ENCODE measurements at regions of chrX and their contacts with region 1.

Region 1: GRCh38 chrX:118100091-118100490 is 16.5 kb downstream of the KLHL13 start:
- DNase-seq: no peak
- ATAC-seq: no peak
- H3K4me3 ChIP-seq: no peak overlapping the region
- H3K27ac ChIP-seq: no peak overlapping the region
- H3K4me1 ChIP-seq: no peaks in the 10 kb centered on the region
- H3K27me3 ChIP-seq: no peaks in the 10 kb centered on the region
- CTCF ChIP-seq: no peak

Region 2: DNA sequence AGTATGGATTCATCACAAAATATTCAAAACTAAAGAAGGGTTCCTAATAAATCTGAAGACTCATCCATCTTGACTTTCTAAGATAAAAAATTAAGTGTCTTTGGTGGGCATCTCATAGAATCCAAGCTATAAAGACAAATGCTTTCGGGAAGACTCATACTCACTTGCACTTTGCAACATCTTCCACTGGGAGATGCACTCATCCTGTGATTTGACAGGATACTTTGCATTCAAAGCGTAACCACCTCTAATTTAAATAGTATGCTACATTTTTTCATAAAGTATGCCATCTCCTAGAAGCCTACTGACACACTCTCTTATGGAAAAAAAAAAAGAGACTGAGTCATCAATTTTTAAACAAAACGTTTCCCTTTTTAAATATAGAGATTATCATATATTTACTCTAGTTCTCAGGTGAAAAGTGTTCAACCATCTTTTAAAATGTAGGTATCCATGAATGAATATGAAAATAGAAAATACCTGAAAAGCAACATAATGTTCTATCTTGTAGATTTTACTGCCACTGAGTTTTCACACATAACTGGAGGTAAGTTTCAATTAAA is 103.1 kb before region 1 on chrX:
- CTCF ChIA-PET with region 1: interaction called, 10 read pairs
- POLR2A ChIA-PET with region 1: no interaction called
- in situ Hi-C with region 1: no loop called
- intact Hi-C with region 1: no loop called
- DNase-seq: no peak
- ATAC-seq: no peak
- H3K4me3 ChIP-seq: no peak overlapping the region
- H3K27ac ChIP-seq: no peak overlapping the region
- H3K4me1 ChIP-seq: no peaks in the 10 kb centered on the region
- H3K27me3 ChIP-seq: no peaks in the 10 kb centered on the region
- CTCF ChIP-seq: peak; percentile 58; the same call in 1 of the 2 replicates

Region 3: GRCh38 chrX:118066867-118067515 is 33.1 kb before region 1 on chrX:
- CTCF ChIA-PET with region 1: no interaction called
- POLR2A ChIA-PET with region 1: no interaction called
- in situ Hi-C with region 1: no loop called
- intact Hi-C with region 1: no loop called
- DNase-seq: no peak
- ATAC-seq: no peak; the same call in 1 of the 2 replicates
- H3K4me3 ChIP-seq: no peak overlapping the region
- H3K27ac ChIP-seq: no peak overlapping the region
- H3K4me1 ChIP-seq: no peaks in the 10 kb centered on the region
- H3K27me3 ChIP-seq: no peaks in the 10 kb centered on the region
- CTCF ChIP-seq: no peak

Measured in Panc1 (cell line).